ENCODE measurements at regions of chr13 and their contacts with region 1.

Region 1: GRCh38 chr13:102845630-102846260 is at the start of gene ERCC5:
- DNase-seq: peak; percentile 94
- ATAC-seq: peak; percentile 93 to 95
- total RNA-seq, gene ERCC5: 27.5 to 30.6 TPM

Region 2: GRCh38 chr13:102580552-102581169 is 265.1 kb before region 1 on chr13:
- intact Hi-C with region 1: loop called in 1 of 2 experiments (anchors 2 kb)
- DNase-seq: no peak
- ATAC-seq: peak; percentile 74 to 78

Region 3: GRCh38 chr13:102596147-102597028 is 249.4 kb before region 1 on chr13 and contains the start of gene TPP2:
- intact Hi-C with region 1: loop called in 1 of 2 experiments (anchors 5 kb)
- DNase-seq: peak; percentile 100
- ATAC-seq: peak; percentile 98
- total RNA-seq, gene TPP2: 33.0 to 39.1 TPM

Region 4: DNA sequence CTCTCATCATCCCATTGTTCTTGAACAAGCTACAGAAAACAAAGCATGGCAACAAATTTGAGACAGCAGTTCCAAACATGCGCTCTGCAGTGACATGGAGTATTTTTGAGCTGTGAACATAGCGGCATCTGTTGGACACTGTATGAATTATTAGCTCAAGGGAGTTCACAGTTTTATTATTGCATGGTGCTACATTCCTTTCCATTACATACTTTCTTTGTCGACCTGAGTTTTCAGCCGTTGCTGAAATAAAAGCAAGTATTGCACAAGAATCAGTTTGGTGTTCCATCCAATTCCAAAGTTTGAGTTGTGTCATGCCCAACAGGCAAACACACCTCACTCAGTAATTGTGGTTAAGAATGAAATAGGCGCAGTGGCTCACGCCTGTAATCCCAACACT is 120.8 kb before region 1 on chr13:
- intact Hi-C with region 1: loop called in 1 of 2 experiments (anchors 2 kb)
- DNase-seq: no peak
- ATAC-seq: peak; percentile 62 to 75

Region 5: GRCh38 chr13:102773441-102774215 is 72.1 kb before region 1 on chr13 and contains the start of gene TEX30:
- intact Hi-C with region 1: loop called in 1 of 2 experiments (anchors 10 kb)
- DNase-seq: peak; percentile 89
- ATAC-seq: peak; percentile 99 to 100
- total RNA-seq, gene TEX30: 9.1 to 9.2 TPM

Region 6: GRCh38 chr13:102970542-102970941 is 124.8 kb after region 1 on chr13:
- intact Hi-C with region 1: no loop called
- DNase-seq: no peak
- ATAC-seq: no peak

Measured in left cardiac atrium (tissue), 4 donors.